Activated naive CD4-positive, alpha-beta T cell treated with anti-CD3 and anti-CD28 coated beads for 36 hours (primary cell): ENCODE measurements at regions of chr20 and their contacts with region 1.

Region 1: GRCh38 chr20:44683263-44684046 is 31.7 kb upstream of the CCN5 start:
- DNase-seq: peak; percentile 72
- H3K4me3 Mint-ChIP-seq: no peak overlapping the region
- H3K27ac Mint-ChIP-seq: no peak overlapping the region
- H3K4me1 Mint-ChIP-seq: peaks cover 4% of the 10 kb centered on the region
- H3K27me3 Mint-ChIP-seq: no peaks in the 10 kb centered on the region

Region 2: DNA sequence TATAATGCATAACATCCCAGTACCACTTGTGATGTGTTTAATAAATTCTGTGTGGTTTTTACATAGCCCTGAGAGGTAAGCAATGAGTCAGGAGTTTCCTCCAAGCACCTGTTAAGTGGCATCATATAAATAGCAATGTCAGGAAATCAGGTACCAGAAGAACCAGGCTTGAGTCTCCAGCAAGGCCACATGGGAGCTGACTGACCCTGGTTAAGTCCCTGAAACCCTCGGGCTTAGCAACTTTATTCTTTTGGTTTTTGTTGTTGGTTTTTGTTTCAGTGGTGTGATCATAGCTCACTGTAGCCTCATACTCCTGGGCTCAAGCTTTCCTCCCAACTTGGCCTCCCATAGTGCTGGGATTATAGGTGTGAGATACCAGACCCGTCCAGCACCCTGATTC is 1563.7 kb before region 1 on chr20:
- CTCF ChIA-PET with region 1: no interaction called
- intact Hi-C with region 1: no loop called
- DNase-seq: no peak
- H3K4me3 Mint-ChIP-seq: no peak overlapping the region
- H3K27ac Mint-ChIP-seq: no peak overlapping the region
- H3K4me1 Mint-ChIP-seq: no peaks in the 10 kb centered on the region
- H3K27me3 Mint-ChIP-seq: peaks cover 6% of the 10 kb centered on the region

Region 3: DNA sequence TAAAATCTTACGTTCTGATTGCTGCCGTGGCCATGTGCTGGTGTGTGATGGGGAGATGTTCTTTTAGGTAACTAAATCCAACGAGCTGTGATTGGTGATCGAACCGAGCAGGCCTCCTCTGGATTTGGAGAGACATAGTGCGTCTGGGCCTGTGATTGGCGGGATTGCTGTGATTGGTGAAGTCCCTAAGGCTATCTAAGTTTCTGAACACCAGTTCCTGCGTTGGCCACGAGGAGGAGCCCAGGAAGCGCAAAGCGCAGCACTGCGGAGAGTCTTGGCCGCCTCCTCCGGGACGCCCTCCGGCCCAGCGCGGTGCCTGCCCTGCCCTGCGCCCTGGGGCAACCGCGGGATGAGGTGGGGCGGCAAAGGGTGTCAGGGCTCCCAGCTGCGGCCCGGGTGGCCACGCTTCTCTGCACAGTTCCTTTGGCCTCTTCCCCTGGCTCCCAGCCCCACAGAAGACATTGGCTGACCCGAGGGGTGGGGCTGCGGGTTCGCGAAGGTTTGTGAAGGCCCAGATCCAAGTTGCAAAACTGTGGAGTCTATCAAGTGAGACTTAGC is 294.9 kb before region 1 on chr20:
- CTCF ChIA-PET with region 1: interaction called, 3 read pairs
- intact Hi-C with region 1: loop called (anchors 2 kb)
- DNase-seq: peak; percentile 90
- H3K4me3 Mint-ChIP-seq: peak overlapping the region; percentile 22
- H3K27ac Mint-ChIP-seq: no peak overlapping the region
- H3K4me1 Mint-ChIP-seq: peaks cover 11% of the 10 kb centered on the region
- H3K27me3 Mint-ChIP-seq: peaks cover 3% of the 10 kb centered on the region

Region 4: GRCh38 chr20:44666066-44666465 is 17.4 kb before region 1 on chr20:
- CTCF ChIA-PET with region 1: interaction called, 19 read pairs
- intact Hi-C with region 1: no loop called
- DNase-seq: no peak
- H3K4me3 Mint-ChIP-seq: no peak overlapping the region
- H3K27ac Mint-ChIP-seq: no peak overlapping the region
- H3K4me1 Mint-ChIP-seq: peaks cover 17% of the 10 kb centered on the region
- H3K27me3 Mint-ChIP-seq: no peaks in the 10 kb centered on the region

Region 5: GRCh38 chr20:44733341-44734069 is 50.0 kb after region 1 on chr20:
- CTCF ChIA-PET with region 1: interaction called, 90 read pairs
- intact Hi-C with region 1: loop called (anchors 1 kb)
- DNase-seq: peak; percentile 82
- H3K4me3 Mint-ChIP-seq: no peak overlapping the region
- H3K27ac Mint-ChIP-seq: no peak overlapping the region
- H3K4me1 Mint-ChIP-seq: peaks cover 27% of the 10 kb centered on the region
- H3K27me3 Mint-ChIP-seq: no peaks in the 10 kb centered on the region

Region 6: DNA sequence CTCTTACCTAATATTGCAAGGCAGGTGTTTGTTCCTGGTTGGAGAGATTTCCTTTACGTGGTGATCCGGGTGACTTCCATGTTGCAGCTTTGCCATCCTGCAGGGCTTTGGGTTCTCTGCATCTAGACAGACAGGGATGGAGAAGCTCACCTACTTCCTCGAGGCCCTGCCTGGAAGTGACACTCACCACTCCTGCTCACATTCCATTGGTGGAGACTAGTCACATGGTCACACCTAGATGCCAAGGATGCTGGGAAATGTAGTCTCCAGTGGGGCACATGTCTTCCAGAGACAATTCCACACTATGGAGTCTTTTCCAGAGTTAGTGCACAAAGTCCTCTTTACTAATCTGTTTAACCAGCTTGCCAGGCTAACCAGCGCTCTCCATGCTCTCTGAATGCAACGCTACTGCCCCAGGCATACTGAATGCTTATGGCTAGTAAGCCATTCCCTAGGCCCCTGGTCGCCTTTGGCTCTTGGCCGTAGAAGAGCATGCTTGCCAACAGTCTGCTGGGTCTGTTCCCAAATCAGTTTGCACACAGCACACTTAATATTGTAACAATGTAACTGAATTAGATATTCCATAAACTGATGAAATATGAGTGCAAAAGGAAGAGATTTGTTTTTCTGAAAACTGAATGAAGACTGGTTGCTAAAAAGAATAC is 55.5 kb after region 1 on chr20:
- CTCF ChIA-PET with region 1: interaction called, 90 read pairs
- intact Hi-C with region 1: no loop called
- DNase-seq: peak; percentile 81
- H3K4me3 Mint-ChIP-seq: peak overlapping the region; percentile 58
- H3K27ac Mint-ChIP-seq: no peak overlapping the region
- H3K4me1 Mint-ChIP-seq: peaks cover 13% of the 10 kb centered on the region
- H3K27me3 Mint-ChIP-seq: no peaks in the 10 kb centered on the region

Region 7: GRCh38 chr20:44747166-44748004 is 63.9 kb after region 1 on chr20:
- CTCF ChIA-PET with region 1: interaction called, 12 read pairs
- intact Hi-C with region 1: no loop called
- DNase-seq: peak; percentile 89
- H3K4me3 Mint-ChIP-seq: peak overlapping the region; percentile 83
- H3K27ac Mint-ChIP-seq: peak overlapping the region; percentile 80
- H3K4me1 Mint-ChIP-seq: peaks cover 17% of the 10 kb centered on the region
- H3K27me3 Mint-ChIP-seq: peaks cover 11% of the 10 kb centered on the region

Region 8: DNA sequence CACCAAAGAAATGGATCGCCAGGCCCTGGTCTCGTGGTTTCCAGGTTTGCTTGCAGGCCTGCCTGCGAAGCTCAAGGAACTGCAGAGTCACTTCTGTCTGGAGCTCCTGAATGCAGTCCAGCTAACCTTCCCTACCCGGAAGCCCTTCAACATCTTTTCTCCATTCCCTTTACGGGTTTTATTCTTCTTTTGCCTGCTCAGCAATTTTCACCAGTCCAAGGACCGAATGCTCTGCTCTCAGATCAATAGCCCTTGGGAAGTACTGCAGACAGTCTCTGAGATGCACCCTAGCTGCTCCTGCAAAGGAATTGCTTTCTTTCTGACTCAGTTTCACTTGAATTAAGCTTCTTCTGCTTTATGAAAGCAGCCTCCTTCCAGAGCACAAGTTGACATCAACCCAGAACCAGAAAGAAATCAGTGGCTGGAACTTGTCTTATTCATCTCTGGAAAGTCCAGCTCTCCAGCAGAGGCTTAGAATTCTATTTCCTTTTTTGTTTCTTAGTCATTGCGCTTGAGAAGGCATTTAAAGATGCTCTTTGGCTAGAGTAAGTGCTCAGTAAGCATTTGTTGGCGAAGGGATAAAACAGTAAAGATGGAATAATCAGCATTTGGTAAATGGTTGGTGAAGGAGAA is 183.4 kb after region 1 on chr20:
- CTCF ChIA-PET with region 1: interaction called, 15 read pairs
- intact Hi-C with region 1: loop called (anchors 1 kb)
- DNase-seq: no peak
- H3K4me3 Mint-ChIP-seq: peak overlapping the region; percentile 52
- H3K27ac Mint-ChIP-seq: no peak overlapping the region
- H3K4me1 Mint-ChIP-seq: peaks cover 9% of the 10 kb centered on the region
- H3K27me3 Mint-ChIP-seq: peaks cover 3% of the 10 kb centered on the region